ENCODE measurements at regions of chr1 and their contacts with region 1.

Region 1: DNA sequence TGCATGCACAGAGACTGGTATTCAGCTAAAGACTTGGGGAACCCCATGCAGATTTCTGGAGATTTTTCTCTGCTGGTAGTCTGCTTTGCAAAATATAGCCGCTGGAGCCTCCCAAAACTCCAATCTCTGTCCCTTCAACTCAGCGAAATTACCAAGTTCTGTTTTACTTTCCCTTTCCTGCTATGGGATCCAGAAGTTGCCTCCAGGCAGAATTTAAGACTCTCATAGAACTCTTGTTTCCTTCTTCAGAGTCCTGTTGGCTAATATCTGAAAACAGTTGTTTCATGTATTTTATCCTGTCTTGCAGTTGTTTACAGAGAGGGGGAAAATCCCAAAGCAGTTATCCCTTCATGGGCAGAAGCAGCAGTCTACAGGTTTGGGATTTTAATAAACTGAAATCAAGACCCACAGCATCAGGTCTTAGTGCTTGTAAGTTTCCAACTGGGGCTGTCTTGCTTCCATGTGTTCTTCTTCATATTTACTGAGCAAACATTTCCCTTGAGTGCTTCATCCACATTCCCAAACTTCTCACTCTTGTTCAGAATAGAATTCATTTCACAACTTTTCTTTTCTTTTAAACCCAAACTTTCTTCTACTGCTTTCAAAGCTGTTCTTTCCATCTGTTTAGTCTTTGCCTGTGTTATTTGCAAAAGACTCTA is 221.3 kb upstream of the DMRTA2 start:
- DNase-seq: no peak
- H3K4me3 ChIP-seq: no peak overlapping the region
- H3K27ac ChIP-seq: peak overlapping the region in 1 of 2 donors; percentile 23
- H3K4me1 ChIP-seq: peaks cover 3% of the 10 kb centered on the region
- H3K27me3 ChIP-seq: no peaks in the 10 kb centered on the region
- CTCF ChIP-seq: no peak
- EP300 ChIP-seq: no peak
- POLR2A ChIP-seq: no peak

Region 2: DNA sequence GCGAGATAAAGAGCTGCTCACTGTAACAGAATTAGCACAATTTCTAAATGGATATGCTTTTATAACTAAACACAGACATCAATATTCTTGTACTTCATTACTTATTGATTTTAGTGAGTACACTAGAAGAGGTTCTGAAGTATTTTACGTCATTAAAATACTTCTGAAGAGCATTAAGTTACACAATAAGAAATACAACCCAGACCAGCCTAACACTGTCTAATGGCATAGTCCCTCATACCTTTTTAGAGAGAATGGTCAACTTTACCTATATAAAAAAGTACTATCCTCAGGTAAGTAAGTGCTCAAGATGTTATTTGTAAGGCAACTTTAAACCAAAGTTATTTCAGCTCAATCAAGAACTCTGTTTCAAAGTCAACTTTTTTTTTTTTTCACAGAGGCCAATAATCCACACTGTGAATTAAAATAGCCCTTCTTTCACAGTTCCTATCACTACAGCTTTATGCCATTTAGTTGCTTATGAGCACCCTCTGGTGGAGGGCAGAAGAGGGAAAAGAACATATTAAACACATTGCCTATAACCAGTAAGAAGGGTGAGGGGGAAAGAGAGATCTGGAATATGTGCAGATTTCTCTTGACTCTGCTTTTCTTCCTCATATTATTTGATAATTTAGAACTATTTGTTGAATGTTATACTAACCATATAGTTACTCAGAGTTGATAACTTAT is 39.2 kb before region 1 on chr1:
- intact Hi-C with region 1: no loop called
- DNase-seq: no peak
- H3K4me3 ChIP-seq: no peak overlapping the region
- H3K27ac ChIP-seq: no peak overlapping the region
- H3K4me1 ChIP-seq: no peaks in the 10 kb centered on the region
- H3K27me3 ChIP-seq: no peaks in the 10 kb centered on the region
- CTCF ChIP-seq: no peak
- EP300 ChIP-seq: no peak
- POLR2A ChIP-seq: no peak

Region 3: DNA sequence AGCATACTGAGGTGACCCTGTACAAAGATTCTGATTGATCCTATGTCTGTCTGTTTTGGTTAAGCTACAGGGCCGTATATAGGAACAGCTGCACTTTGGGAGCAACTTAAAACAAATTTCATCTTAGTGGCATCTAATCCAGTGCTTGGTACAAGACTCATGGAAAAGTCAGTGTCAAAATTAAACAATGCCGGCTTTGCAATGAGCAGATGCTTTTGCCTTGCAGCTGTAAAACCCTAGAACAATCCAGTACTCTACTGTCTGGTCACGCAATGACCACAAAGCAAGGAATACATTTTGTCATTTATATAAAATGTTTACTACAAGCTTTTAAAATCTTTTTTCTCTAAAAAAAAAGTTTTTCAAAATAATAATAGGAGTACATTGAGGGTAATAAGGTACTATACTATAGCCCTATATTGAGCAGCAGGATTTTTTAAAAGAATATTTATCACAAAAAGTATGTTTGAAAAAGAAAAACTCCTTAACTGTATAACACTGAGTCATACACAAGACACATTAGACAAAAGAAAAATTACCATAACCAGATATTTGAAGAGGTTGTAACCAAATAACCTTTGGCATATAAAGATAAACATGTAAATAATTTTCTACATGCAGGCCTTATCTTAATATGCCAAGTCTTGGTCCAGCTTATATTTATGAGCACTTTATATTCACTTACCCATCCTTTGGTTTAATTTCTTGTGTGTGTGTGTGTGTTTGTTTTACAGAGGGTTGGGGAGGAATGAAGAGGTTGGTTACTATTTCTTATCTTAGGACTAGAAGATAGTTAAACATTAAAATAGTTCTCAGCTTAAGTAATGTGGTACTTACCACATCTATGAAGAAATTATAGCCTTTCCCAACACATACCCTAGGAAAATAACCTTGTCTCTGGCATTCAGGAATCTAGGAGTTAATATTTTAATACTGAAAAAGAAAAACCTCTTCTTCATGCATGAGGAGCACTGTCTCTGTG is 53.2 kb after region 1 on chr1:
- intact Hi-C with region 1: loop called in 2 of 4 experiments (anchors 10 kb)
- DNase-seq: no peak
- H3K4me3 ChIP-seq: no peak overlapping the region
- H3K27ac ChIP-seq: no peak overlapping the region
- H3K4me1 ChIP-seq: no peaks in the 10 kb centered on the region
- H3K27me3 ChIP-seq: no peaks in the 10 kb centered on the region
- CTCF ChIP-seq: no peak
- EP300 ChIP-seq: no peak
- POLR2A ChIP-seq: no peak

Region 4: GRCh38 chr1:50704126-50704525 is 59.5 kb after region 1 on chr1:
- intact Hi-C with region 1: loop called in 2 of 4 experiments (anchors 10 kb)
- DNase-seq: no peak
- H3K4me3 ChIP-seq: no peak overlapping the region
- H3K27ac ChIP-seq: no peak overlapping the region
- H3K4me1 ChIP-seq: peaks cover 3% of the 10 kb centered on the region
- H3K27me3 ChIP-seq: no peaks in the 10 kb centered on the region
- CTCF ChIP-seq: peak; percentile 14 to 42 (median 37)
- EP300 ChIP-seq: no peak
- POLR2A ChIP-seq: no peak

Region 5: DNA sequence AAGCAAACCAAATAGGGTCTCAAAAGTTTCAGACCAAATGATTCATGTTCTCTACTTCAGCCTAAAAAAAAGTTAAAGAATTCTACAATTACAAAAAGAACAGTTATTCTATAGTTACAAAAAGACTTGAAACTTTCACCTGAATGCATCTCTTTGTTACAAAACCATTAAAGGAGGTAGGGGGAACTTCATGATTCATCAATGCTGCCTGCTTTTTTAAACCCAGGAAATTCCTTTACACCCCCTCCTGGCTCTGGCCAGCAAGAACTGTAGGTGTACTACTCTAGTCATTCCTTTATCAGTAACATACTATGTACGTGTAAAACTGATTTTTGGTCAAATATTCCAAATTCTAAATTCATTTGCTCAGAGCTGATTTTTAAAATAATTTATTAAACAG is 310.5 kb after region 1 on chr1:
- intact Hi-C with region 1: no loop called
- DNase-seq: no peak
- H3K4me3 ChIP-seq: no peak overlapping the region
- H3K27ac ChIP-seq: no peak overlapping the region
- H3K4me1 ChIP-seq: peaks cover 3% of the 10 kb centered on the region
- H3K27me3 ChIP-seq: no peaks in the 10 kb centered on the region
- CTCF ChIP-seq: no peak
- EP300 ChIP-seq: no peak
- POLR2A ChIP-seq: no peak